GM10248 (cell line): ENCODE measurements at regions of chr17 and their contacts with region 1.

Region 1: DNA sequence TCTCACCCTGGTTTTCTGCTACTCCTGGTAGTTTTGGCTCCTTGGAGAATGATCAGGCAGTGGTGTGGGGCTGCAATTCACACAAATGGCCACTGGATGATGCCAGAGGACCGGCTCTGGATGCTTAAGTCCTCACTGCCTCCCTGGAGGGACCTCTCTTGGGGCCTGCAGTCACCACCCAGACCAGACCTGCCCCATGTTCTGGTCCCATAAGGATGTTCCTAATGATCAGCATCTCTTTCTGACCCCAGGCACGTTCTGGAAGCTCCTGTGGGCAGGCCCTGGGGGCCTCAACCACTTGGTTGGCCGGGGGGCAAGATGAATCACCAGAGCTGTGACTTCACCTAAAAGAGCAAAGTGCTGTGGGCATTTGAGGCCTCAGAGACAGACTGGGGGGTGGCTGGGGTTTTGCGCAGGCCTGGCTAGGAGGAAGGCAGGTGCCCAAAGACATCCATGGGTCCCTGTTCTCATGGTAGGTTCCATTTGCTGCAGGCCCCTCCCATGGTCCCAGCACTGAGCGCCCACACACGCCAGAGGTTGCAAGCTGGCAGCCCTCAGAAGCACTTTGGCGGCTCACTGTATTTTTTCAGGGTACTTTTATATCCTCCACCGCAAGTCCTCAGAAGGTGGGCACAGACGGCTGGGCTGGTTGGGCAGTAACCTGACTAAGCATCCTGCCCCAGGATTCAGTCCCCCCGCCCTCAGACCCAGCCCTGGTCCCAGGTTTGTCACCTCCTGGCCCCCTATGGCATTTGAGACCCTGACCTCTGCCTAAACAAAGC is 53.2 kb downstream of the NT5M start:
- DNase-seq: peak; percentile 85
- CTCF ChIP-seq: peak; percentile 98

Region 2: DNA sequence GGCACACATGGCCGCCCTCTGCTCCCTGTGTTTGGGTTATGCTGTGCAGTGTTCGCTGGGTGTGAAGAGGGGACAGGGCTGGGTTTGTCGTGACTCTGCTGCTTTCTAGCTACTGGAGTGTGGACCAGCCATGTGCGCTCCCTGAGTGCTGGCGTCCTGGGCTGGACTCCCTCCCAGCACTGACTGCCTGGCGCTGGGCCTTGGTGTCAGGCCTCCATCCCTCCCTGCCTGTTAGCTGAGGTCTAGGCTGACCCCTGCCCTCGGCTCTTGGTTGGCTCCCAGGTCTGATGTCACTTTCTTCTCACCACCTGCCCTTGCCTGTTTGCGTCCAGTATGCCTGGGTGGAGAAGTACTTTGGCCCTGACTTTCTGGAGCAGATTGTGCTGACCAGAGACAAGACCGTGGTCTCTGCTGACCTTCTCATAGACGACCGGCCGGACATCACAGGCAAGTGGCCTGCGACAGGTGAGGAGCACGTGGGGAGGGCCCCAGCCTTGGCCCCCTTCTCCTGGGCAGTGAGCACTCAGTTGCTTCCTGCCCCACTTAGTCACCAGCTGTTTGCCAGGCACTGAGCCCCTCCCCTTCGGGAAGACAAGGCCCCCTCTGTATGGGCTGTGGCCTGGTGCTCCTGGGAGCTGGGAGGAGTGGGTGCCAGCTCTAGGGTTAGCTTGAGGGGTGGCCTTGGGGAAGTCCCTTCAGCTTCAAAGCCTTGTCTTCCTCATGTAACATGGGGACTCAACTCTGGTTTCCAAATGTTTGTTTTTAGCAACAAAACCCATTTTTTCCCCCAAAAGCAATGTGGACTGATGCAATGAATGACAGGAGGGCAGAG is 11.7 kb before region 1 on chr17:
- CTCF ChIA-PET with region 1: interaction called, 22 read pairs
- POLR2A ChIA-PET with region 1: no interaction called
- DNase-seq: no peak
- CTCF ChIP-seq: no peak

Region 3: GRCh38 chr17:17366941-17367875 is 10.9 kb after region 1 on chr17:
- CTCF ChIA-PET with region 1: interaction called, 22 read pairs
- POLR2A ChIA-PET with region 1: no interaction called
- DNase-seq: no peak
- CTCF ChIP-seq: no peak

Region 4: GRCh38 chr17:17403899-17404576 is 47.7 kb after region 1 on chr17:
- CTCF ChIA-PET with region 1: no interaction called
- POLR2A ChIA-PET with region 1: no interaction called
- DNase-seq: no peak
- CTCF ChIP-seq: no peak

Region 5: GRCh38 chr17:17568749-17569195 is 212.4 kb after region 1 on chr17:
- CTCF ChIA-PET with region 1: interaction called, 11 read pairs
- POLR2A ChIA-PET with region 1: no interaction called
- DNase-seq: peak; percentile 80
- CTCF ChIP-seq: peak; percentile 57

Region 6: DNA sequence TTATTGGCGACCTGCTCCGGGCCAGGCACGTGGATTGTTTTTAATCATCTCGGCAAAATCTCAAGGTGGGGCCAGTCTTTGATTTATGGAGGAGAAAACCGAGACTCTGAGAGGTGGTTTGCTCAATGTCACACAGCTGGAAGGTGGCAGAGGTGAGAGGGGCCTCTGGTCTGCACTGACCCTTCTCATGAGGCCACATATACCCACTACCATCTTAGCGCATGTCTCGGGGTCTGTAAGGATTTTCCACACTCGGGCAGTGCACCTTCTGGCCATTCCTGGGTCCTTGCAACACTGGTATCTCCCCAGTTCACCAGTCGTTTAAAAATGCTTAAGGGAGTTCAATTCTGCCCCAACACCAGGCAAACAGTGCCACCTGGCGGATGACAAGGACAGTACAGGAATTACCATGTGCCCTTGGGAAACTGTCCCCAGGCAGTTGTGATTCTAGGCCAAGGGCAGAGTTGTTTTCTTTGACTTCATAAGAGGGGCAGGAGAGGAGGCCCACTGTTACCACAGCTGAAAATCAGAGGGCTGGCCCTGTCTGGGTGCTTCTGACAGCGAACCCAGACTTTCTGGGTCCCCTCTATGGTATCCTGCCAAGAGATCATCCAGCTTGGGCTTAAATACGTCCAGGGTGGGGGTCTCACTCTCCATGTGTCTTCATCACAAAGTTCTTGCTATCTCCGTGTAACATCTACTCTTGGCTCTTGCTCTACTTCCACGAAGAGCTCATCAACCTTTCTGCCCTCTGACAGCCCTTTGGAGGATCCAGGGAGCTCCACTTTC is 285.5 kb after region 1 on chr17:
- CTCF ChIA-PET with region 1: interaction called, 168 read pairs
- POLR2A ChIA-PET with region 1: no interaction called
- DNase-seq: peak; percentile 77
- CTCF ChIP-seq: peak; percentile 88

Region 7: DNA sequence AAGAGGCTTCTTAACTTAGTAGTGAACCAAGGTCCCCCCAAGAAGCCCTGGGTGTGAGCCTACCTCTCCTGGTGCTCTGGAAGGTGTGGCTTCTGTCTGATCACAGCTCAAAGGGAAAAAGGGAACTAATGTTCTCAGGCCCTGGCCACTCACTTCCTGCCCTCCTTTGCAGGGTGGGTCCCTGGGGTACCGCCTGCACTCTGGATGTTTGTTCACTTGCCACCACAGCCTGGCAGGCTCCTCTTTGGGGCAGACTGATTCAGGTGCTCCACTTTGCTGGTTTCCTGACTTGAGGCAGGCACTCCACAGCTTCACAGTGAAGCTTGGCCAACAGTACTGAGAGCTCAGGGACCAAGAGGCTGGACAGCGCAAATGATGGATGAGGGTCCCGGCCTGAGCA is 746.3 kb after region 1 on chr17:
- CTCF ChIA-PET with region 1: no interaction called
- POLR2A ChIA-PET with region 1: no interaction called
- DNase-seq: no peak
- CTCF ChIP-seq: no peak